ENCODE measurements at regions of chr13 and their contacts with region 1.

Region 1: DNA sequence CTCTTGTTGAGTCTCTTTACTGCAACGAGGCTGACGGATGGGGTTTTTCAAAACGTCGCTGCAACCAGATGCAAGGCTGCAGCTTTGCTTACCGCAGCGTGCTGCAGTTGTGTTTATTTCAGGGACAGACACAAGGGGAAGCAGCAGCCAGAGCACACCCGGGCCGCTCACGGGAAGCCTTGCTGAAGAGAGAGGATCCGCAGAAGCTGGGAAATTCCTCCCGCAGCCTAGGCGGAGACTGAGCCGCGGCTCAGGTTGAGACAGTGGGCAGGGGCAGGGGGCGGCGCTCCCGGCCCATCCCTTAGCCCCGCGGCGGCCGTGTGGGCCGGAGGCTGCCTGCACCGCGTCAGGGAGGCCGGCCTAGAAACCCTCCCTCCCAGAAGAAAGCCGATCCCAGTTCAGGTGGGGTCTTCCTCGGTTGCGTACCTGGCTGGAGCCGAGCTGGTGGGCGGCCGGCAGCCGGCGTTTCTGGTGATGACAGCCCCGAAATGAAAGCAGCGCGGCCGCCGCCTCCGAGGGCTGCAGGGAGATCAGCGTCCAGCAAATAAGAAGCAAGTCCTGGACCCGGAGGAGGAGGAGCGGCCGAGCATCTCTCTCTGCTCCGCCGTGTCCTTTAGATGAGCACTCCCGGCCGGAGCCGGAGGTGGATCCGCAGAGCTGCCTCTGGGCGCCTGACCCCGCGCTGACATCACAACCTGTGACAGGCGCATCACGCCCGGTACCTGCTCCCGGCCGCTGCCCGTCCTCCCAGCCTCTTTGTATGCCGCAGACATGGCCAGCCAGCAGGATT is at the start of gene FRY:
- DNase-seq: peak; percentile 70
- H3K4me3 ChIP-seq: peak within 1 kb of the TSS; percentile 61 to 68 (median 63)
- H3K27ac ChIP-seq: no peak within 1 kb of the TSS
- H3K4me1 ChIP-seq: peaks cover 9% of the 10 kb centered on the region
- H3K27me3 ChIP-seq: no peaks in the 10 kb centered on the region
- CTCF ChIP-seq: peak in 1 of 2 donors; percentile 16
- total RNA-seq, gene FRY: 5.8 to 23.0 TPM

Region 2: DNA sequence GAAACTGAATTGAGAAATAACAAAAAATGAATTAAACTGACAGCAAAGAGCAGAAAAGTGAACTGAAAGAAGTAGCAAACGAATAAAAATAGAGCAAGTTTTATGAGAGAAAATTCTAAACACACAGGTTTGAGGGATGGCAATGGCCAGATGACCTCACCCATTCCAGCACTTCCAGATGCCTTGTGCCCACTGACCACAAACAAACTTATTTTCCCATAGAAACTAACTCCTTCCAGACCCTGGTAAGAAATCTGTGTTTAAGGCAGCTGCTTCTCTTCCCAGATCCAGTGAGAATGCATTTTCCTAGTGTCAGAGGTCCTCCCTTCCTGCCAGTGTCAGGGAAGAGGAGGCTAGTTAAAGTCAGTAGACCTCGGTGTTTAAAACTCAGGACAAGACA is 240.2 kb before region 1 on chr13:
- CTCF ChIA-PET with region 1: no interaction called
- dilution Hi-C with region 1: no loop called
- in situ Hi-C with region 1: no loop called
- intact Hi-C with region 1: no loop called
- DNase-seq: no peak
- H3K4me3 ChIP-seq: no peak overlapping the region
- H3K27ac ChIP-seq: no peak overlapping the region
- H3K4me1 ChIP-seq: no peaks in the 10 kb centered on the region
- H3K27me3 ChIP-seq: no peaks in the 10 kb centered on the region
- CTCF ChIP-seq: no peak

Region 3: DNA sequence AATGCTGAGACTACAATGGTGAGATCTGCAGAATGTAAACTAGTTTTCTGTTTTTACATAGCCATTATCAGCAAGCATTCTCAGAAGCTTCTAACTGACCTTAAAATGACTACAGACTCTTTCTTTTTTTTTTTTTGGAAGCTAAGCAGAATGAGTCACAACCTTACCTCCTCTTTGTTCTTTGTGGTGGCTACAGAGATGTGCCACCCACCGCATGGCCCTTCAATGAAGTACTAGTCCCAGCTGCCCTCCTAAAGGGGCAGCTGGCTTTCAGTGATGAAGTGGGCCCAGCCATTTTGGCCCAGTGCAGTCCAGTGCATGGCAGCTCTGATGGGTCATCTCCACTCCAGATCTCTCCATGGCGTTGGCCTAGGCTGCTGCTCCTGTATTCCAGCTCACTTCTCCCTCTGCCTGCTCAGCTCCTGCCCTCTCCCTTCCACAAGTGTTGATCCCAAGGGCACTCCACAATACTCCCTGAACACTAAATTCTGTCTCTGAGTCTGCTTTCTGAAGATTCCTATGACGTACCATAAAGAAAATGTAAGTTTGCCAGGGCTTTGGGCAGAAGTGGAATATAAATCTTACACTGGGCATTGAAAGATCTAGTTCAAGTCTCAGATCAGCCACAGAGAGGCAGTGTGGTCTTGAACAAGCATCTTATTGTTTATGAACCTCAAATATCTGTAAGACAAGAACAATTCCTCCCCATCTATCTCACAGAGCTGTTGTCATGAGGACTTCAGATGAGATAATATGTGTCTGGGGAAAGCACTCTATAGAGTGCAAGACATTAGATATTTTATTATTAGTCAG is 206.3 kb before region 1 on chr13:
- CTCF ChIA-PET with region 1: no interaction called
- dilution Hi-C with region 1: no loop called
- in situ Hi-C with region 1: no loop called
- intact Hi-C with region 1: no loop called
- DNase-seq: no peak
- H3K4me3 ChIP-seq: no peak overlapping the region
- H3K27ac ChIP-seq: no peak overlapping the region
- H3K4me1 ChIP-seq: no peaks in the 10 kb centered on the region
- H3K27me3 ChIP-seq: no peaks in the 10 kb centered on the region
- CTCF ChIP-seq: peak; percentile 7 to 17

Region 4: GRCh38 chr13:31903111-31903815 is 128.0 kb before region 1 on chr13:
- CTCF ChIA-PET with region 1: no interaction called
- dilution Hi-C with region 1: no loop called
- in situ Hi-C with region 1: no loop called
- intact Hi-C with region 1: no loop called
- DNase-seq: no peak
- H3K4me3 ChIP-seq: no peak overlapping the region
- H3K27ac ChIP-seq: no peak overlapping the region
- H3K4me1 ChIP-seq: no peaks in the 10 kb centered on the region
- H3K27me3 ChIP-seq: no peaks in the 10 kb centered on the region
- CTCF ChIP-seq: no peak

Region 5: DNA sequence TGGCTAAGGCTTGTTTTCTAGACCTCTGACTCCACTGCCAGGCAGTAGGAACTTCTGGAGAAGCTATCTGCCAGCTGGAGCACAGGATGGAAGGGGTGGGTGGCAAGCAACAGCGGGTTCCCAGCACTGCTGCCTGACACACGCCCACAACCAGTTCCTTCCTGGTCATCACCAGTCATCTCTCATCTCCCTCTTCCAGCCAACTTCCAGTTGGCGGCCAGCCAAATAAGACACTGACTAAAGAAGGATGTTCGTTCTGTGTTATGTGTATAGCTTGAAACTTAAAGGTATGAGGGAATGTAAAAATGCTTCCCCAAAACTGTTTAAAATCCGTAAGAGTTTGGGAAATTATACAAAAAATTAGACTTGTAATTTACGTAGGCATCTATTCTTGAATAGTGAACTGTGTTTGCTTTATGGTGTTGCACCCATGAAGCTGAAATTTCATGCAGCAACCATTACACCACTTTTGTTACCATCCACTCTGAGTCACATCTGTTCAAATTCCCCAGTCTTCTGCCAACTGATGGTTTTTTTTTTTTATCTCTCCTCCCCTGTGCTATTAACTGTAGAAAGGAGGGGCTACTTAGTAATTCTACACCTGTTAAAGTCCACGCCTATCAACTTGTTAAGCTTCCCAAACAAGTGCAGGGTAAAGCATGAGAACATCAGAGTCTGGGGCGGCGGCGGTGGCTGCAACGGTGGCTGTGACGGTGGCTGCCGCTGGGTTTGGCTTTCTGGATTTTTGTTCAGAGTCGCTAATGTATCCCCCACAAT is 85.8 kb before region 1 on chr13:
- CTCF ChIA-PET with region 1: no interaction called
- dilution Hi-C with region 1: no loop called
- in situ Hi-C with region 1: no loop called
- intact Hi-C with region 1: loop called (anchors 5 kb)
- DNase-seq: peak; percentile 84
- H3K4me3 ChIP-seq: peak overlapping the region in 1 of 3 experiments; percentile 22
- H3K27ac ChIP-seq: peak overlapping the region; percentile 36
- H3K4me1 ChIP-seq: peaks cover 14% of the 10 kb centered on the region
- H3K27me3 ChIP-seq: no peaks in the 10 kb centered on the region
- CTCF ChIP-seq: no peak

Region 6: GRCh38 chr13:32009362-32009761 is 21.9 kb before region 1 on chr13:
- CTCF ChIA-PET with region 1: no interaction called
- dilution Hi-C with region 1: no loop called
- in situ Hi-C with region 1: no loop called
- intact Hi-C with region 1: loop called (anchors 2 kb)
- DNase-seq: no peak
- H3K4me3 ChIP-seq: no peak overlapping the region
- H3K27ac ChIP-seq: no peak overlapping the region
- H3K4me1 ChIP-seq: no peaks in the 10 kb centered on the region
- H3K27me3 ChIP-seq: no peaks in the 10 kb centered on the region
- CTCF ChIP-seq: no peak

Region 7: GRCh38 chr13:32164622-32165268 is 133.5 kb after region 1 on chr13:
- CTCF ChIA-PET with region 1: interaction called, 3 read pairs
- dilution Hi-C with region 1: no loop called
- in situ Hi-C with region 1: no loop called
- intact Hi-C with region 1: loop called (anchors 5 kb)
- DNase-seq: no peak
- H3K4me3 ChIP-seq: no peak overlapping the region
- H3K27ac ChIP-seq: no peak overlapping the region
- H3K4me1 ChIP-seq: peaks cover 6% of the 10 kb centered on the region
- H3K27me3 ChIP-seq: no peaks in the 10 kb centered on the region
- CTCF ChIP-seq: peak; percentile 44 to 61

Measured in mammary epithelial cell (primary cell).